PC-9 (cell line): ENCODE measurements at regions of chr1 and their contacts with region 1.

Region 1: DNA sequence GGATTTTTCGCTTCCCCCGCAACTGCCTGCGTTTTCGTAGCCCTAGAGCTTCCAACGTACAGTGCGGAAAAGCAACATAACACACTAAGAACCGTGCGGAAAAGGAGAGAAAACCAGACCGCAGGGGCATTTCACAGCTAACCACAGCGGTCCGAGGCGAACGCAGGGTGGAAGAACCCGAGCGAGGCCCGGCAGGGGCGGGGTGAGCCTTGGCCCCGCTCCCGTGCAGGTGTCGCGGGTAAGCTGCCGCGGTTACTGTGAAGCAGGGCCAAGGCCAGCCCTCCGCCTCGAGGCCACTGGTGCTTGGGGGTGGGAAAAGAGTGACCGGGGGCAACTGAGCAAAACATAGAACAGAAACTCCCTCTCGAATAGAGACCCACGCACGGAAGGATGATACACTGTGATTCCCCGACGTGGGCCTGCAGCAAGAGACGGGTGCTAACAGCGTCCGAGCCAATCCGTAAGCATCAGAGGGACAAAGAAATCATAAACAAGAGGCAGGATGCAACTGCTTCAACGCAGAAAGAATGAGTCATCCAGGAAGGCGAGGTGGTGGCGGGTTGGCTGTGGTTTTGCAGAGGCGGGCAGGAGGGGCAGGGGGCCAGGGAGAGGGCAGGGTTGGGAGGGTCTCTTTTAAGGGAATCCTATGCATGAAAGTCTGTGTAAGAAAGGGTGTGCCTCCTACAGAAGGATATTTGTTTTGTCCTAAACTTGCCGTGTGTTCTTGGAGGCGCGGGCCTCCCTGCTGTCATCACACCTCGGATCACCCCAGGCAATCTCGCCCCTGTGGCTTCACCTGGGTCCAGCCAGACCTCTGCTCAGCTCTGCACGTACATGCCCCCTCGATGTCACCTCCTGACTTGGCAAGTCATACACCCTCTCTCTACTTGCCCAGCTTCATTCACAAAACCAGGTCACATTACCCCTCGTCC is 7.3 kb downstream of the GNG4 start:
- DNase-seq: peak; percentile 82 to 87
- H3K4me3 ChIP-seq: peak overlapping the region; percentile 41; the same call in 1 of the 2 replicates
- H3K27ac ChIP-seq: peak overlapping the region; percentile 63
- H3K4me1 ChIP-seq: peaks cover 29% of the 10 kb centered on the region
- H3K27me3 ChIP-seq: no peaks in the 10 kb centered on the region
- CTCF ChIP-seq: no peak

Region 2: DNA sequence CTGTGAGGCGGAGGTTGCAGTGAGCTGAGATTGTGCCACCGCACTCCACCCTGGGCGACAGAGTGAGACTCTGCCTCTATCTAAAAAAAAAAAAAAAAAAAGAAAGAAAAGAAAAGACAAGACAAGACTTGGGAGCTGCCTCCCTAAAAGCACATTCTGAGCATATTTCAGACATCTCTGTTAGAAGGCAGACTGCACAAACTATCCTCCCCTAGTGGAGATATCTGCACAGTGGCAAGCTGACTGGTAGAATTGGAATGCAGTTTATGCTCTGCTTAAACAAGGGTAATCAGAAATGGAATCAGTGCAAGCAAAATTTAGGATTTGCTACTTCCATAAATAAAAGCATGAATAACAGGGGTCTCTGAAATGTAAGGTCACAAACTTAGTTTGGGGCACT is 24.5 kb before region 1 on chr1:
- CTCF ChIA-PET with region 1: no interaction called
- POLR2A ChIA-PET with region 1: no interaction called
- intact Hi-C with region 1: no loop called
- DNase-seq: no peak
- H3K4me3 ChIP-seq: no peak overlapping the region
- H3K27ac ChIP-seq: no peak overlapping the region
- H3K4me1 ChIP-seq: peaks cover 3% of the 10 kb centered on the region
- H3K27me3 ChIP-seq: no peaks in the 10 kb centered on the region
- CTCF ChIP-seq: no peak

Region 3: DNA sequence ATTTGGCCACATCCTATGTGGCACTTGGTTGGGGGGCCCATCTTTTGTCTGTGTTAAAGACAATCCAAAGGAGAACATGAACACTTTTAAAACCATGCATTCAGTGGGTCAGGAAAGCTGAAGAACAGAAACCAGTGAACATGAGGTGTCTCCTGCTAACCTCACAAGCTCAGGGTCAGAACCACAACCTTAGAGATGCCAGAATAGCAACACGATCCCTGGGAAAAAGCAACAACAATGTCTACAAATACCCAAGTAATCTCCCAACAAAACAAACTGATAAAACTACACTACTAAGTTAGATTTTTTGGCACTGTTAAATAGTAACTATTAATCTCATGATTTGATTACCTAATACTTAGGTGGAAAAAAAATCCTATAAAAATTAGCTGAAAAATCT is 41.4 kb after region 1 on chr1:
- CTCF ChIA-PET with region 1: no interaction called
- POLR2A ChIA-PET with region 1: no interaction called
- intact Hi-C with region 1: no loop called
- DNase-seq: no peak
- H3K4me3 ChIP-seq: no peak overlapping the region
- H3K27ac ChIP-seq: no peak overlapping the region
- H3K4me1 ChIP-seq: no peaks in the 10 kb centered on the region
- H3K27me3 ChIP-seq: no peaks in the 10 kb centered on the region
- CTCF ChIP-seq: no peak

Region 4: GRCh38 chr1:235708390-235708962 is 66.2 kb after region 1 on chr1:
- CTCF ChIA-PET with region 1: no interaction called
- POLR2A ChIA-PET with region 1: no interaction called
- intact Hi-C with region 1: loop called (anchors 1 kb)
- DNase-seq: peak; percentile 58 to 82
- H3K4me3 ChIP-seq: no peak overlapping the region
- H3K27ac ChIP-seq: peak overlapping the region; percentile 88
- H3K4me1 ChIP-seq: peaks cover 54% of the 10 kb centered on the region
- H3K27me3 ChIP-seq: no peaks in the 10 kb centered on the region
- CTCF ChIP-seq: no peak

Region 5: GRCh38 chr1:235734335-235734734 is 92.1 kb after region 1 on chr1:
- CTCF ChIA-PET with region 1: interaction called, 5 read pairs
- POLR2A ChIA-PET with region 1: no interaction called
- intact Hi-C with region 1: loop called (anchors 1 kb)
- DNase-seq: no peak
- H3K4me3 ChIP-seq: no peak overlapping the region
- H3K27ac ChIP-seq: no peak overlapping the region
- H3K4me1 ChIP-seq: no peaks in the 10 kb centered on the region
- H3K27me3 ChIP-seq: no peaks in the 10 kb centered on the region
- CTCF ChIP-seq: no peak

Region 6: GRCh38 chr1:235831148-235831547 is 188.9 kb after region 1 on chr1:
- CTCF ChIA-PET with region 1: no interaction called
- POLR2A ChIA-PET with region 1: interaction called, 10 read pairs
- intact Hi-C with region 1: no loop called
- DNase-seq: no peak
- H3K4me3 ChIP-seq: no peak overlapping the region
- H3K27ac ChIP-seq: no peak overlapping the region
- H3K4me1 ChIP-seq: peaks cover 6% of the 10 kb centered on the region
- H3K27me3 ChIP-seq: no peaks in the 10 kb centered on the region
- CTCF ChIP-seq: no peak